Posterior vena cava (tissue), 2 donors: ENCODE measurements at regions of chr13 and their contacts with region 1.

Region 1: DNA sequence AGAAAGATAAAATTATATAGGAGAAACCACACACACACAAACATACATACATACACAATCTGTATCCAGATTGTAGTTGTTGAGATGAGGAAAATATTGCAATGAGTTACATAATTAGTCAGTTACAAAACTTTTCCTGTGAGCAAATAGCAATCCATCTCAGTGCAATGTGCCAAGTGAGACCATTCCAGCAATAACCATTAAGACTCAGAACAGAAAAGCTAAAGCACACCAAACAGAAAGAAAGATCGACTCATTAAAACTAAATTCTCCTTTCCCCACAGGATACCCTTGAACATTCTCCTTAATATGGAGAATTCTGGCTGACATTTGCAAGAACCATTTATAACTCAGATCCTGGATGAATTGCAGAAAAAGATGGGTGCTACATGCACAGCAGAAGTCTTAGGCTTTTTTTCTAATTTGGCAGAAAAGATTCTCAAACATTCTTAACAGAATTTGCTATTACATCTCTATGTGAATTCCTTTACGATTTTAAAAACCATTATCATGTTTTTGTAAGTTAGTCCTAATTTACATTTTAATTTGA is 1341.2 kb upstream of the SPRY2 start:
- DNase-seq: no peak

Region 2: DNA sequence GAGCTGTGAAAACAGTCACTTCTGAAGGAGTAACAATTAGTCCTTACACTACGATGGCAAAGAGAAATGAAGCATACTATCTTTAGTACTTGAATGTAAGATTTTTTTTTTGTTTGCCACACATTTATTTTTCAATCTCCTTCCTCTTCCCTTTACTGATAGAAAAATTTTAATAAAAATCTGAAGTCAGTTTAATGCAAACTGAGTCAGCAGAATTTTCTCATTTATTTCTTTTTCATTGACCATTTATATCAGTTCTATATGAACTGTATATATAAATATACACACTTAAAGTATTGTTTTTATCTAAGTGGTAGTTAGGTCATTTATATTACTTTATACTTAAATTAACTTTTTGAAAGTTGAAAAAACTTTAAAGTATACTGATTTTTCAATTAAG is 332.1 kb before region 1 on chr13:
- intact Hi-C with region 1: no loop called
- DNase-seq: no peak

Region 3: DNA sequence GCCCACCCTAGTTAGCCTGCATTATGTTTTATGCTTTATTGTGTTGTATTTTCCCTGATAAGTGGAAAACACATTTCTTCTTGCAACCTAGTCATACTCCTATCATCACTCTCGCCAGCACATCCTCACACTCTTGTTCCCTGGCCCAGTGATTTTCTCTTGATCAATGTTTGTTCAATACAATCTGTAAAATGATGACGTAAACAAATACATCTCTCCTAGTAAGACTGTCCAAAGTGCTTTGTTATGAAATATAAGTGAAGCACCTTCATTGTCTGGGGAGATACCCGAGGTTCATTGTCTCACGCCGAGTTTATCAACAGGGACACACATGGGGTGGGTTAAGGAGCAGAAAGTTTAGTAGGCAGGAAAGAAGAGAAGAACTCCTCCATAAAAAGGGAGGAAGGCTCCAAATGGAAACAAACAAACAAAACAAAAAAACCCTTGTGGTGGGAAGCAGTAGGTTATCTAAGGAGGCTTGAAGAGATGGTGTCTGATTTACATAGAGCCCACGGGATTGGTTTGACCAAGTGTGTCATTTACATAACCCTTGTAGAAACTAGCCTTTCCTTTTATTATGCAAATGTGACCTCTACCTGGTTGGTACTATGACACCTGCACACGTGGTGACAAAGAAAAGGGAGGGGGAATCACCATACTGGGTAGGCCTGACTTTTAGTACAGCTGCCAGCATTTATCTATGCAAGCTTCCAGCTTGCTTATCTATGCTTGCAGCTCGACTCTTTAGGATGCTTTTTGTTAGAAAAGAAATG is 23.4 kb before region 1 on chr13:
- intact Hi-C with region 1: no loop called
- DNase-seq: no peak

Region 4: DNA sequence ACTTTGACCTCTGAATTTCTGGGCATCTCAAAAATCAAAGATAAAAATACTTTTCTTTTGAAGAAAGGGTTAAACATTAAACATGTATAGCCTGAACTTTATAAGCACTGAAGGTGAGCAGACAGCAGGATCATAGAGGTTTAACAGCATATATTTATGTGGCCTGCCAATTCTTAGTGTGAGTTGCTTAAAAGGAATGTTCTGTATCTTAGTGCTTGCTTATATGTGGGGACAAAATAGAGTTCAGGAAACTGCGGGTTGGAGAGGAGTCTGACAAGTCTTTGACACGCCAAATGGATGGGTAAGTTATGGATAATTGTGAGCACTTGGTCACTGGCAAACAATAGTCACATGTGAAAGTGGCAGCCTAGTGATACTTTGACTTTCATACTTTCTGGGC is 78.2 kb after region 1 on chr13:
- intact Hi-C with region 1: loop called in 1 of 2 experiments (anchors 2 kb)
- DNase-seq: no peak